ENCODE measurements at regions of chr20 and their contacts with region 1.

Region 1: DNA sequence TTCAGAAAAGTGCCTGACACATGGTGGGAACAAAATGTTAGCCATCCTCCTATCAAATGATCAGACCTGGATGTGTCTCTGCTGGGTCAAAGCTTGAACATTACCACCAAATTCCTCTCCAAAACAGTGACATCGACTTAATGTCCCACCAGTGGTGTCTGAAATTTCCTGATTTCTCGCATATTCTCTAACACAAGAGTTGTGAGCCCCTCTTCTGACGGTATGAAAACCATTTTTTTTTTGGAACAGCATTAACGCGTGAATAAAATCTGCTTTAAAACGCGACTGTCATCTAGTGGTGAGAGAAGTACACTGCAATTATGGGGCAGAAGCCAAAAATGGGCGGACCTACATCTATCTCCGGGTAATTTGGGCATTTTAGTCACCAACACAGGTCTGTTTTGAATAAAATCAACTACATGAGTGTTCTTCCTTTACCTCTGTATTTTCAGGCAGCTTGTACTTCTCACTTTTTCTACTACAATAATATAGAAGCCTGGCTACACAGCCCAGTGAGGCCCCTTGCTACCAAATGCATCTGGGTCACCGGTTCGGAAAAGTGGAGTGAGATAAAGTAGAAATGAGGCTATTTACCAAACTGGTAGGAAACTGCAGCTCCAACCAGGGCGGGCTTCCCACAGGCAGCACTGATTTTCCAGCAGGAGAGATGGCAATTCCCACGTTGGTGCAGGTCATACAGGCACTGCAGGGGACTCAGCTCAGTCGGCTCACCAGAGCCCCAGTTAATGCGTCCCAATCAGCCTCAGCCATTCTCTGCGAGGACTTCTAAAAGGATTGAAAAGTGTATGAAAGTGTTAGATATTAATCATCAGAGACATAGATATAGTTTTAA is 27.4 kb downstream of the MGME1 start:
- DNase-seq: no peak
- H3K4me3 ChIP-seq: no peak overlapping the region
- H3K27ac ChIP-seq: no peak overlapping the region
- H3K4me1 ChIP-seq: peaks cover 0 to 16% (median 15%) of the 10 kb centered on the region in 4 donors
- H3K27me3 ChIP-seq: no peaks in the 10 kb centered on the region
- CTCF ChIP-seq: peak in 2 of 3 experiments; percentile 92 to 97
- EP300 ChIP-seq: no peak
- POLR2A ChIP-seq: no peak

Region 2: DNA sequence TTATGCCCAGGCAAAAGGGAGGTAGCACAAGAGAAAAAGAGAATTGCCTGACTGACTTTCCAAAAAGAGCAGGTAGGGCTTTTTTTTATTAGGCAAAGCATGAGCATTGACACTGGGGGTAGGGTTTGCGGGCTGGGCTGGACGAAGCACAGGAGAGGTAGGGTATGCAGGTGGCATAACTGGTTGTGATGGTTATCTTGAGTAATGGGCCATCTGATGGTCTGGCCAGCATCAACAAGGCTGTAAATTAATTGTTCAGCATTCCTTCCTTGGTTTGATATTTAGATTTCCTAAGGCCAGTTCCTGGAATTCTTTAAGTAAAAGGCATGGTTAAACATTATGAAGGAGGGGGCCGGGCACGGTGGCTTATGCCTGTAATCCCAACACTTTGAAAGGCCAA is 451.1 kb before region 1 on chr20:
- intact Hi-C with region 1: no loop called
- DNase-seq: no peak
- H3K4me3 ChIP-seq: no peak overlapping the region
- H3K27ac ChIP-seq: peak overlapping the region; percentile 52 to 83 (median 80)
- H3K4me1 ChIP-seq: peaks cover 9 to 66% (median 60%) of the 10 kb centered on the region in 4 donors
- H3K27me3 ChIP-seq: no peaks in the 10 kb centered on the region
- CTCF ChIP-seq: no peak
- EP300 ChIP-seq: no peak
- POLR2A ChIP-seq: no peak

Region 3: DNA sequence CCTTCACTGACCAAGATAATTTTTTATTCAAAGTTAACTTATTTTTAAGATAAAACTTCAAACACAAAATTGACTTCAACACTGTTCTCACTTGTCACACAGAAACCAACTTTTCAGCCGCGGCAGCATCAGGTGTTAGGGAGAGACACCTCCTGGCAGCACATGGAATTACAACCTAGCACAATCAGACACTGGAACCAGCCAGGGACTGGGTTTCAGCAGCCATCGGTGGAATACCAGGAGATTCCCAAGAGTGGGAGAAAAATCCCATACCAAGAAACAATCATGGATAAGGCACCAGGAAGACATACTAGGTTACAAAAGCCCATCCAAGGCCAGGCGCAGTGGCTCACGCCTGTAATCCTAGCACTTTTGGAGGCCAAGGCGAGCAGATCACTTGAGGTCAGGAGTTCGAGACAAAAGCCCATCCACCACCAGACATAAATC is 97.6 kb before region 1 on chr20:
- intact Hi-C with region 1: loop called (anchors 10 kb)
- DNase-seq: no peak
- H3K4me3 ChIP-seq: no peak overlapping the region
- H3K27ac ChIP-seq: no peak overlapping the region
- H3K4me1 ChIP-seq: peaks cover 23 to 34% (median 30%) of the 10 kb centered on the region in 4 donors
- H3K27me3 ChIP-seq: no peaks in the 10 kb centered on the region
- CTCF ChIP-seq: peak in 2 of 3 experiments; percentile 93 to 97
- EP300 ChIP-seq: no peak
- POLR2A ChIP-seq: no peak

Region 4: DNA sequence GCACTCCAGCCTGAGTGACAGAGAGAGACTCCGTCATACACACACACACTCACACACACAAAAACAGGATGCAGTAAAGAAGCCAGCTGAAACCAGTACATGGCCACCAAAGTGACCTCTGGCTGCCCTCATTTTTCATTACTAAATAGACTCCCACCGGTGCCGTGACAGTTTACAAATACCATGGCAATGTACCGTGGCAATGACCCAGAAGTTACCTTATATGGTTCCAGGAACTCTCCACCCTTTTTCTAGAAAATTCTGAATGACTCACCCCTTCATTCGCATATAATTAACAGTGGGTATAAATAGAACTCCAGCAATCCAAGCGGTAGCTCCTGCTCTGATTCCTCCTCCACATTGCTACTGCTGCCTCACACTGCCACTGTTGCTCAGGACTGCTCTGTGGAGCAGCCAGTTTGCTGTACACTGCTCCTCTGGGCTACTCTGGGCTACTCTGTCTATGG is 85.3 kb before region 1 on chr20:
- intact Hi-C with region 1: no loop called
- DNase-seq: no peak
- H3K4me3 ChIP-seq: no peak overlapping the region
- H3K27ac ChIP-seq: peak overlapping the region; percentile 71 to 80 (median 74)
- H3K4me1 ChIP-seq: peaks cover 6 to 26% (median 23%) of the 10 kb centered on the region in 4 donors
- H3K27me3 ChIP-seq: no peaks in the 10 kb centered on the region
- CTCF ChIP-seq: no peak
- EP300 ChIP-seq: no peak
- POLR2A ChIP-seq: no peak

Measured in esophagus muscularis mucosa (tissue), 4 donors.